Tibial artery (tissue), 4 donors: ENCODE measurements at regions of chr3 and their contacts with region 1.

Region 1: DNA sequence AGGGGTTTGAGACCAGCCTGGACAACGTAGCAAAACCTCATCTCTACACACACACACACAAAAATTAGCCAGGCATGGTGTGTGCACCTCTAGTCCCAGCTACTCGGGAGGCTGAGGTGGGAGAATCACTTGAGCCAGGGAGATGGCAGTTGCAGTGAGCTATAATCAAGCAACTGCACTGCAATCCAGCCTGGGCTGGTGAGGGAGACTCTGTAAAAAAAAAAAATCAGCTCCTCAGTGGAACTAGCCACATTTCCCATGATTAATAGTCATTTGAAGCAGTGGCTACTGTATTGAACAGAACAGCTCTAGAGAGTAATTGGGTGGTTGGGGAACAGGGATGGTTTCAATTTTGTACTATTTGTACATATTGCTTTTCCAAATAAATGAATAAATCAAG is 11.5 kb upstream of the FBXO40 start:
- DNase-seq: no peak
- H3K4me3 ChIP-seq: no peak overlapping the region
- H3K27ac ChIP-seq: no peak overlapping the region
- H3K4me1 ChIP-seq: no peaks in the 10 kb centered on the region
- H3K27me3 ChIP-seq: no peaks in the 10 kb centered on the region
- CTCF ChIP-seq: no peak

Region 2: GRCh38 chr3:121659586-121659985 is 77.9 kb after region 1 on chr3:
- intact Hi-C with region 1: loop called (anchors 2 kb)
- DNase-seq: no peak
- H3K4me3 ChIP-seq: peak overlapping the region; percentile 27 to 36
- H3K27ac ChIP-seq: no peak overlapping the region
- H3K4me1 ChIP-seq: no peaks in the 10 kb centered on the region
- H3K27me3 ChIP-seq: no peaks in the 10 kb centered on the region
- CTCF ChIP-seq: no peak